Posterior vena cava (tissue), 2 donors: ENCODE measurements at regions of chr6 and their contacts with region 1.

Region 1: GRCh38 chr6:36765594-36766398 is 68.2 kb downstream of the RAB44 start:
- DNase-seq: peak; percentile 94

Region 2: GRCh38 chr6:36701401-36701991 is 64.3 kb before region 1 on chr6:
- intact Hi-C with region 1: no loop called
- DNase-seq: no peak

Region 3: DNA sequence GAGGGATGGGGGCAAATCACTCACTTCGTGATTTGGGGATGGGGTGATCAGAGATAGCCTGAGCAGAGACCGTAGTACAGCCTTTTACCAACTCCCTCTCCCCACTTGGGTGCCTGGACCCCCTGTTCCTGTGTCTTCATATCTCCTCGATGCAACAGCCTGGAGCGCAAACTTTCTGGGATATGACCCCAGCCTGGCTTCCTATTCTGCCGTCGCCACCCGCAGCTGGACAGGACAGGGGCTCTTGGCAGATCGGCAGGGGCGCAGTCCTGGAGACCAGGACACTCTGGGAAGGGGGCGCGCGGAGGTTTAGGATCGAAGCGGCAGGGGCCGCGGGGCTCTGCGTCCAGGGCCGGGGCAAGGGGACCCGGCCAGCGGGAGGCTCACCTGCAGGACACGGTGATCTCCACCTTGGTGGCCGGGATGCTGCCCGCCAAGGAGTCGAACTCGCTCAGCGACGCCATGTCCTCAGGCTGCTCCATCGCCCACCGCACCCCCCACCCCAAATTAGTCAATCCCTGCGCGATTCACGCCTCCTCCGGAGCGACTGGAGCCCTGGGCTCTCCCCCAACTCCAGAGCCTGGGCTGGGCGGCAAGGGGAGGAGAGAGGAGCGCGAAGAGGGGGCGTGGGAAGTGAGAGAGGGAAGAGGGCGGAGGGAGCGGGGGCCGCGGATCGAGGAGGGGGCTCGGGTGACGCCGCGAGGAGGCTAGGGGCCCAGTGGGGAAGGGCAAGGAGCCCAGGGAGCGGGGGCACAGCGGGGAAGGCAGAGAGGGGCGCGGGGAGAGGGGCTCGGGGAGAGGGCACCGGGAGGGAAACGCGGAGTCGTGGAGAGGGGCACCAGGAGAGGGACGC is 73.3 kb after region 1 on chr6 and contains the start of gene CPNE5:
- intact Hi-C with region 1: loop called in 1 of 2 experiments (anchors 1 kb)
- DNase-seq: no peak
- total RNA-seq, gene CPNE5: 5.2 to 5.4 TPM

Region 4: DNA sequence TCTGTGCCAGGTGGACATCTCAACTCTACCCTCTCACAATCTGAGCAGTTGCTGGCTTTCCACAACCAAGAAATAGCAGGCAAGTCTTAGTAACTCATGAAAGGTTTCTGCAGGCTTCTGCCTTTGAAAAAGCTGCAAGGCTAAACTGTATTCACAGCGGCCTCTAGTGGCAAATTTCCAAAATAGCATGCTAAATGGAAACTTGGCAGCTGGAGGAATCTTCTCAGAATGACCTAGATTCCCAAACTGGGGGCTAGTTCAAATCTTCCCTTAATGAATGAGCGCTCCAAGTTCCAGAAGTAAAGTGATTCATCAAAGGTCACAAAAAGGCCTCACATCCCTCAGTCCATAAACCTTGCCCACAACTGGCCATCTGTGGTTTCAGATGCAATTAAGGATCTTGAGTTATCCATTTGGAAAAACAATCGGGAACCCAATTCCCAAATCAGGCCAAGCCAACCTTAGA is 85.4 kb after region 1 on chr6:
- intact Hi-C with region 1: loop called in 1 of 2 experiments (anchors 2 kb)
- DNase-seq: no peak

Region 5: DNA sequence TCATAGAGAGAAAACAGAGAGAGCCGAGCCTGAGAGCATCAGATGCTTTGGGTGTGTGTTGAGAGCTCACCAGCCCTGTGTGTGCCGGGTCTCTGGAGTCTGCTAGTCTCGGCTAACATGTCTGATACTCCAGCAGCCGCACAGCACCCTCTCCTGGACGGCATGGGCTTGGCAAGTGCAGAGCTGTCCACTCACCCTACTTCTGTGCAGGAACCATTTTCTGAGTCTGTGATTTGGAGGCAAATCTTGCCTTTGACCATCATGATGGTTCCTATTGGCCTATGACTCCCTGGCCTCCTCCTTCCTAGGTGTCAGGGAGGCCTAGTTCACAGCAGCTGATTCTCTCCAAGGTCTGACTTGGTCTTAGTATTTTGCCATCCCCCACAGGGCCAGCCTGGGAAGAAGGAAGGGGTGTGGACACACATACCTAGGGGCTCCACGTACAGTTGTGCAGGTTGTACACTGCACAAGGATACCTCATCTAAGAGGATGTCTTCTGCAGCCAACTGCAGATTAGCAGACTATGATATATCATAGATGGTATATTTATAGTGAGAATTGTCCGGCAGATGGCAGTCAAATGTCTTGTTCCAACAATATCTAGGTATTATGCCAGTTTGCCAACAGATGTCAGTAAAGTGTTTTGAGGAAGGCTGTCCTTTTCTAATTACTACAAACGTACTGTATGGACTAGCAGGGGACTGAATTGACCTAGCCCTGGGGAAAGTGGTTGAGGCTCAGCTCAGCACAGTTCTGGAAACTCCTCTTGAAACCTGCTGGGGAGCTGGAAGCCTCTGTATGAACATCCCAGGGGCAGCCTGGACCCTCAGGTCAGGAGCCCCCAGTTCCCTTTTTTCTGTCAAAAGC is 252.6 kb after region 1 on chr6:
- intact Hi-C with region 1: loop called in 1 of 2 experiments (anchors 5 kb)
- DNase-seq: peak; percentile 96

Region 6: DNA sequence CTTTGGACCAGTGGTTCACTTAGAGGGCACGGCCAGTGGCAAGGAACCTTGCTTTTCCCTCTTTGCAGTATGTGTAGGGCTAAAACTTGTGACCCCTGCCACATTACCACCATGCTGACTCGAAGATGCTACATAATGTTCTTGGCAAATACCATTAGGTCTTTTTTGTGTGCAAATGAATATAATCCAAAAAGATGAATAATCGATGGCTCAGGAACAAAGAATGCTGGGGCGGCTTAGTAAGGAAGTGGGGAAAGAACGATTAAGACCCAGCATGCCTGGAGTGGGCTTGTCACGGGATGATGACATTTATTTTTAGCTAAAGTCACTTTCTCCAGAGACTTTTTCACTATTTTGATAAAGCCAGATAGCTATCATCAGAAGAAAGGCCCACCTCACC is 690.3 kb after region 1 on chr6:
- intact Hi-C with region 1: no loop called
- DNase-seq: no peak